Common myeloid progenitor, CD34-positive (primary cell): ENCODE measurements at regions of chr16 and their contacts with region 1.

Region 1: GRCh38 chr16:53207810-53208752 is 153.3 kb downstream of the CHD9 start:
- DNase-seq: peak; percentile 87 to 94 (median 91)
- H3K4me3 ChIP-seq: peak overlapping the region in 6 of 7 experiments; percentile 63 to 96 (median 74)
- H3K27ac ChIP-seq: peak overlapping the region; percentile 90 to 95
- H3K4me1 ChIP-seq: peaks cover 11 to 42% (median 28%) of the 10 kb centered on the region in 4 experiments
- H3K27me3 ChIP-seq: no peaks in the 10 kb centered on the region

Region 2: DNA sequence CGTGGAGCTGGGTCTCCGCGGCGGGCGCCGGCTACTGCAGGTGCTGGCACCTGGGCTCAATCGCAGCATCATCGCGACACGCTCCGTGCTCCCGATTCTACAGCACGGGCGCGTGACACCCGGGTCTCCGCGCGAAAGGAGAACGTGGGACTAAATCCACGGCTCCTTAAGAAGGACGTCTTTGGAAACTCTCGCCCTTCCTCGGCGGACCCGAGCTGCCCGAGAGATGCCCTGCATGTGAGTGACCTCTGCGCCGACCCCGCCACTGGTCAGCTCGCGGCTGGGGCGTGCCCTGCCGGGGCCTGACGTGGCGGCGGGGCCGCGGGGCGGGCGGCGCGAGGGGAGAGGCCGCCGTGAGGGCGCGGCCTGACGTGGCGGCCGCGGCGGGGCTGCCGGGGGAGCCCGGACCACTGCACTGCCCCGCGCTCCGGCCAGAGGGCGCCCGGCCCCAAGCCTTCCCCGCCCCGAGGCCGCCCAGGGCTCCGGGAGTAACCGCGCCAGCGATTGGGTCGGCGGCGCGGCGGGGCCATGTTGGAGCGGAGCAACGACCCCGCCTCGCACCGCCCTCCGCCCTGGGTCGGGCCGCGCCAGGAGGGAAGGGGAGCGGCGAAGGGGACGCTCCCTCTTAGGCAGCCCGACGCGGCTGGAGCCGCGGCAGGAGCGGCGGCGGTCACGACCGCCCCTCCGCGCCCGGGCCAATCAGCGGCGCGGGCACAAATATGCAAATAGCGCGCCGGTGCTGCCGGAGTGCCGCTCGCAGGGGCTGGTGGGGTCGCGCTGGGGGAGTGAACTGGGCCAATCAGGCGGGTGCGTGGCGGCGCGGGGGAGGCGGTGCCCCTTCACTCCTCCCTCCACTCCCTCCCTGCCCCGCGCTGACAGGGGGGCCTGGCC is 77.7 kb before region 1 on chr16:
- CTCF ChIA-PET with region 1: interaction called, 12 read pairs
- POLR2A ChIA-PET with region 1: interaction called, 4 read pairs
- DNase-seq: peak; percentile 95 to 98 (median 97)
- H3K4me3 ChIP-seq: peak overlapping the region; percentile 70 to 94 (median 89)
- H3K27ac ChIP-seq: peak overlapping the region; percentile 68 to 87
- H3K4me1 ChIP-seq: peaks cover 3 to 16% (median 12%) of the 10 kb centered on the region in 4 experiments
- H3K27me3 ChIP-seq: no peaks in the 10 kb centered on the region

Region 3: GRCh38 chr16:53159781-53160436 is 48.2 kb before region 1 on chr16:
- CTCF ChIA-PET with region 1: interaction called, 23 read pairs
- POLR2A ChIA-PET with region 1: no interaction called
- DNase-seq: peak; percentile 75 to 82 (median 77)
- H3K4me3 ChIP-seq: no peak overlapping the region
- H3K27ac ChIP-seq: no peak overlapping the region
- H3K4me1 ChIP-seq: no peaks in the 10 kb centered on the region
- H3K27me3 ChIP-seq: no peaks in the 10 kb centered on the region

Region 4: GRCh38 chr16:53166099-53166498 is 42.0 kb before region 1 on chr16:
- CTCF ChIA-PET with region 1: interaction called, 23 read pairs
- POLR2A ChIA-PET with region 1: no interaction called
- DNase-seq: no peak
- H3K4me3 ChIP-seq: no peak overlapping the region
- H3K27ac ChIP-seq: no peak overlapping the region
- H3K4me1 ChIP-seq: no peaks in the 10 kb centered on the region
- H3K27me3 ChIP-seq: no peaks in the 10 kb centered on the region

Region 5: DNA sequence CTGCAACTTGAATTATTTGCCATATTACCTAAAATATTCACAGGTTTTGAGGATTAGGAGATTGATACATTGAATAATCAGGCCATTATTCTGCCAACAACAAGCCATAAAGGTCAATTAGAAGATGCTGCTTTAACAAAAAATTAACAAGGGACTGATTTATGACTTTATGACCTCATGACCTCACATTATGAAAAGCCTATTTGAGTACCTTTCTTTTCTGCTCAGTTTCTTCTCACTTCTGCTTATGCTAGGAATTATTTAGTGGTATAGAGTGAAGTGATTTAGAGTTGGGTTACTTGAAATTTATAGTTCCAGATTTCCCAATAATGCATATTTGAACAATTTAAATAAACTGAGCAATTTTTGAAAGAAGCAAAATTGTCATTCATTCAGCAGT is 31.6 kb before region 1 on chr16:
- CTCF ChIA-PET with region 1: no interaction called
- POLR2A ChIA-PET with region 1: no interaction called
- DNase-seq: no peak
- H3K4me3 ChIP-seq: no peak overlapping the region
- H3K27ac ChIP-seq: no peak overlapping the region
- H3K4me1 ChIP-seq: peaks cover 0 to 4% (median 0%) of the 10 kb centered on the region in 4 experiments
- H3K27me3 ChIP-seq: no peaks in the 10 kb centered on the region

Region 6: GRCh38 chr16:53220585-53220984 is 12.5 kb after region 1 on chr16:
- CTCF ChIA-PET with region 1: interaction called, 15 read pairs
- POLR2A ChIA-PET with region 1: no interaction called
- DNase-seq: peak; percentile 67 to 74 (median 72)
- H3K4me3 ChIP-seq: peak overlapping the region in 1 of 7 experiments; percentile 30
- H3K27ac ChIP-seq: peak overlapping the region in 1 of 2 experiments; percentile 80
- H3K4me1 ChIP-seq: peaks cover 39 to 64% (median 51%) of the 10 kb centered on the region in 4 experiments
- H3K27me3 ChIP-seq: no peaks in the 10 kb centered on the region